H1 (cell line): ENCODE measurements at regions of chr1 and their contacts with region 1.

Region 1: DNA sequence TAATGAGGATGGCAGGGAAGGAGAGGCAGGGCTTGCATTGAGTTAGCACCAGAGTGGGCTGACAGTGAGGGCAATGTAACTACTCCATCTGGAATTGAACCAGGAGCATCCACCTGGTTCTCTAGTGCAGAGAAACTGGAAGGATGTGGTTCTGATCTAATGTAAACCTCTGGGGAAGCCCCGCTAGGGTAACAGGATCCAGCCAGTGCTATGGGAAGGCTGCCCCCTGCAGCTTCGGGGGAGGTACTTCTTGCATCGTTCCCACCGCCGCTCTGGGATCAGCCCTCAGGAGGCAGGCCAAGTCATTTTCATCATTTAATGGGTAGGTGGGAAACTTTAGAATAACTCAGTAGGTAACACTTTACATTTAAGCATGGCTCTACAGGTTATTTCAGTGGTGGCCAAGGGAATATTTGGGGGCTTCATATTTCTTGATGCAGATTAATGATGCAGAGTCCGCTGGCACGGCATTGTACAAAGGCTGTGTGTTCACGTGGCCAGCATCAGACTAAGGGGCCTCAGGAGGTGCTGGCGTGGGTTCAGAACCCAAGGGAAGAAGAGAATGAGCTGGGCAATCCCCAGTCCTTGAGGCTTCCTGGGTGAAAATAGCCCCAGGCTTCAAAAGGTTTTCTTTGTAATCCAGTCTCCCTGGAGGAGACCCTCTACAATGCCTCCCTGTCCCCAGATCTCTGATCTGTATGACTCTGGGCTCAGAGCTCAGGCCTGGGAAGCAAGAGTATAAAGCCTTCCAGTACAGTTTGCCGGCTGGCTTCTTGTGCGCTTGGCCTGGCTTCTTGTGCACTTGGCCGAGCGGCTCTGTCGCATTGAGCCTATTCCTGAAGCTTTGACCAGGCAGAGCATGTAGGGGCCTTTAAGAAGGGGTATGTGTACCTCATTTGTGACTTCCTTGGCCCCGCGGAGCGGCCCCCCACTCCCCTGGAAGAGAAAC is 26.4 kb upstream of the KAZN start:
- DNase-seq: peak in 1 of 2 experiments; percentile 78
- H3K4me3 ChIP-seq: no peak overlapping the region
- H3K27ac ChIP-seq: no peak overlapping the region
- H3K4me1 ChIP-seq: peaks cover 0 to 4% (median 0%) of the 10 kb centered on the region in 4 experiments; a peak in 2 of 7 replicates
- H3K27me3 ChIP-seq: no peaks in the 10 kb centered on the region; a peak in 1 of 7 replicates
- CTCF ChIP-seq: peak; percentile 81 to 87 (median 84)
- EP300 ChIP-seq: 0 out of 3 replicates have a peak, but pooled peaks of 1 of the 2 experiments have one; percentile 9
- POLR2A ChIP-seq: no peak
- RAD21 ChIP-seq: peak; percentile 75 to 84

Region 2: GRCh38 chr1:14465996-14466395 is 106.1 kb before region 1 on chr1:
- CTCF ChIA-PET with region 1: no interaction called
- POLR2A ChIA-PET with region 1: no interaction called
- DNase-seq: no peak
- H3K4me3 ChIP-seq: no peak overlapping the region
- H3K27ac ChIP-seq: no peak overlapping the region
- H3K4me1 ChIP-seq: no peaks in the 10 kb centered on the region
- H3K27me3 ChIP-seq: no peaks in the 10 kb centered on the region
- CTCF ChIP-seq: no peak
- EP300 ChIP-seq: no peak
- POLR2A ChIP-seq: no peak
- RAD21 ChIP-seq: no peak

Region 3: GRCh38 chr1:14487671-14488070 is 84.4 kb before region 1 on chr1:
- CTCF ChIA-PET with region 1: no interaction called
- POLR2A ChIA-PET with region 1: no interaction called
- DNase-seq: no peak
- H3K4me3 ChIP-seq: no peak overlapping the region
- H3K27ac ChIP-seq: no peak overlapping the region
- H3K4me1 ChIP-seq: no peaks in the 10 kb centered on the region
- H3K27me3 ChIP-seq: no peaks in the 10 kb centered on the region
- CTCF ChIP-seq: no peak
- EP300 ChIP-seq: no peak
- POLR2A ChIP-seq: no peak
- RAD21 ChIP-seq: no peak

Region 4: GRCh38 chr1:14539309-14539708 is 32.8 kb before region 1 on chr1:
- CTCF ChIA-PET with region 1: no interaction called
- POLR2A ChIA-PET with region 1: no interaction called
- DNase-seq: no peak
- H3K4me3 ChIP-seq: no peak overlapping the region
- H3K27ac ChIP-seq: no peak overlapping the region
- H3K4me1 ChIP-seq: no peaks in the 10 kb centered on the region
- H3K27me3 ChIP-seq: no peaks in the 10 kb centered on the region
- CTCF ChIP-seq: no peak
- EP300 ChIP-seq: no peak
- POLR2A ChIP-seq: no peak
- RAD21 ChIP-seq: no peak

Region 5: GRCh38 chr1:14553711-14554110 is 18.4 kb before region 1 on chr1:
- CTCF ChIA-PET with region 1: interaction called, 19 read pairs
- POLR2A ChIA-PET with region 1: interaction called, 3 read pairs
- DNase-seq: no peak
- H3K4me3 ChIP-seq: no peak overlapping the region
- H3K27ac ChIP-seq: no peak overlapping the region
- H3K4me1 ChIP-seq: peaks cover 0 to 4% (median 3%) of the 10 kb centered on the region in 4 experiments; a peak in 3 of 7 replicates
- H3K27me3 ChIP-seq: no peaks in the 10 kb centered on the region
- CTCF ChIP-seq: no peak
- EP300 ChIP-seq: no peak
- POLR2A ChIP-seq: no peak
- RAD21 ChIP-seq: no peak

Region 6: GRCh38 chr1:14561014-14561693 is 10.9 kb before region 1 on chr1:
- CTCF ChIA-PET with region 1: interaction called, 17 read pairs
- POLR2A ChIA-PET with region 1: interaction called, 3 read pairs
- DNase-seq: no peak
- H3K4me3 ChIP-seq: no peak overlapping the region
- H3K27ac ChIP-seq: no peak overlapping the region
- H3K4me1 ChIP-seq: no peaks in the 10 kb centered on the region
- H3K27me3 ChIP-seq: no peaks in the 10 kb centered on the region
- CTCF ChIP-seq: no peak
- EP300 ChIP-seq: no peak
- POLR2A ChIP-seq: no peak
- RAD21 ChIP-seq: no peak

Region 7: DNA sequence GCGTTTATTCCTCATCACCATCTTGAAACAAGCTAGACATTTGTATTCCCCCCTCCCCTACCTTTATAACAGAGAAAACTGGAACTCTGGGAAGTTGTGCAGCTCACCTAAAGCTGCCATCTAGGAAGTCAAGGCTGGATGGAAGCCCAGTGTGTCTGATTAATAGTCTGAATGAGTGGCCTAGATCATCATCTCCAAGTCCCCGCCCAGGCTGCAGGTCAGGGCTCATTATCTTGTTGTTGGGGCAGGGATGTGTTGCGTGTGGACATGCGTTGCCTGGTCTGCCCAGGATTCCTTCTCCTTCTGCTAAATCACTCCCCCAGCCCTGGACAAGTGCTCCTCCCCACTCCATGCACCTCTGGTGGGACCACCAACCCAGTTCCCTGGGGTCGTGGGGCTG is 11.7 kb after region 1 on chr1:
- CTCF ChIA-PET with region 1: interaction called, 24 read pairs
- POLR2A ChIA-PET with region 1: no interaction called
- DNase-seq: no peak
- H3K4me3 ChIP-seq: no peak overlapping the region
- H3K27ac ChIP-seq: no peak overlapping the region
- H3K4me1 ChIP-seq: no peaks in the 10 kb centered on the region
- H3K27me3 ChIP-seq: peaks cover 0 to 2% (median 0%) of the 10 kb centered on the region in 4 experiments; a peak in 2 of 7 replicates
- CTCF ChIP-seq: no peak
- EP300 ChIP-seq: no peak
- POLR2A ChIP-seq: no peak
- RAD21 ChIP-seq: no peak